Heart right ventricle (tissue), 16 donors: ENCODE measurements at regions of chr5 and their contacts with region 1.

Region 1: DNA sequence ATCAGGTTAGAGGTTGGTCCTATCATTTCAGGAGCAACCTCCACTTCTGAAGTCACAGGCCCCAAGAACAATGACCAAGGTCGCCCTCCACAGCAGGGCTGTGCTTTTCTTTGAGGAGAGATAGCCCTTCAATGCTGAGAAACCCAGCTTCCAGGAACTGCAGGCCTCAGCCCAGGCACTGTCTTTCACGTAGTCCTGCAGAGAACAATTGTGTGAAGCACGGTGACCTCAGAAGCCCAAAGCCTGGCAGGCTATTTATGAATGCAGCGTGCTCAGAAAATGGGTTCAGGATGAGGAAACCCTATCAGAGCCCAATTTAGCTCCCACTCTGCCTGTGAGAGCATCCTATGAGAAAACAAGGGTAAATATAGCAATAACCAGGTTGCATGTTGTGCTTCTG is 388.3 kb downstream of the PLK2 start:
- DNase-seq: peak; percentile 33 to 87
- ATAC-seq: peak; percentile 93 to 98 (median 98)
- H3K4me3 ChIP-seq: no peak overlapping the region
- H3K27ac ChIP-seq: peak overlapping the region; percentile 5 to 92 (median 77)
- H3K4me1 ChIP-seq: peaks cover 2 to 66% (median 52%) of the 10 kb centered on the region in 9 donors
- H3K27me3 ChIP-seq: no peaks in the 10 kb centered on the region
- CTCF ChIP-seq: peak in 1 of 9 donors; percentile 9

Region 2: DNA sequence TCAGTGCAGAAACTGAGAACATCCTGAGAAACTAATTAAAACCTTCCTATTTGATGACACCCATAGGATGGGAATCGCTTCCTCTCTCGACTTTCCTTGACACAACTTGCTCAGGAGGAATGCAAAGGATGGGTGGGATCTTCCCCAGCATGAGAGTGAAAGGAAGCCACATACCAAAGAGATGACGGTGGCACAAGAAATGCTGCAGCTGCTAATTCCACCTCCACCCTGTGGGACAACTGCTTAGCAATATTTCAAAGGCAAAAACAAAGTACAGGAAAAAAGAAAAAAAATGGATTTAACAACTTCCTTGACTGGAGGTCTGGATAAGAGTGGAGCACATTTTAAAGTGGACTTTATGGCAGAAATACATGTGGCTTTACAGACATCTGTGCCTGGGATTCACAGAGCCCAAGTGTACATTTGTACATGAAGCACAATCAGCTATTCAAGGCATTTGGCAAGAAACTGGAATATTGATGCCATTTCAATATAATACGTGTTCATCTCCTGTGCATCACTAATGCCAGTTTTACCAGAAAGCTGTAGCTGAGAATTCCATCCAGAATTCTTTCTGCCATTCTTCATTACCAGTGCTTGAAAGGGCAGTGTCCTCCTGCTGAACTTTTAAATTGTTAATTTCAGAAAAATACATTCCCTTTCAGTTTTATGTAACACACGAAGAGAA is 229.7 kb before region 1 on chr5:
- intact Hi-C with region 1: loop called in 1 of 10 experiments (anchors 5 kb)
- DNase-seq: no peak
- ATAC-seq: peak in 7 of 8 donors; percentile 66 to 87 (median 73)
- H3K4me3 ChIP-seq: no peak overlapping the region
- H3K27ac ChIP-seq: peak overlapping the region in 4 of 10 donors; percentile 29 to 67 (median 42)
- H3K4me1 ChIP-seq: peaks cover 0 to 47% (median 20%) of the 10 kb centered on the region in 9 donors
- H3K27me3 ChIP-seq: no peaks in the 10 kb centered on the region
- CTCF ChIP-seq: no peak

Region 3: DNA sequence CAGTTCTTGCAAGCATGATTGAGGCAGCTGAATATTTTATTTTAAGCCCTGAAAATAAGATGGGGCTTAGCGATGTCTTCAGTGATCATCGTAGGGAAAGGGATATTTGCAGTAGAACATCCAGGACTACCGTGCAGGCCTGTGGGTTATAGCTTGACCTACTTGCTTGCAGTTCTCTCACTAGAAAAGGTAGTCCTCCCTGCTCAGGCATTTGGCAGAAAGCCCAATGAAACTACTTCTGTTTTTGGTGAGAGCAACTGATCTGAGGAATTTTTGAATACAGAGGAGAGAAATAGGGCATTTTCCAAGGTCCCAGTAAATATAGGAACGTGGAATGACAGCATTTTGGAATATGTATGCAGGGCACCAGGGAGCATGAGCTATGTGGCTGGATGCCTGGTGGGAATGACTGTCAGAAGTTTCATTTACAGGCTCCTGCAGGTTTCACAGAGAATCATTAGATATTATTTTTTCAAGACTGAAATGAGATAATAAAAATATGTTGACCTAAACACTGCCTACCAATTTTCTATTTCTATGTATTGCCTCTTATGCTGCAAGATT is 171.1 kb before region 1 on chr5:
- intact Hi-C with region 1: loop called in 2 of 10 experiments (anchors 10 kb)
- DNase-seq: no peak
- ATAC-seq: no peak
- H3K4me3 ChIP-seq: no peak overlapping the region
- H3K27ac ChIP-seq: no peak overlapping the region
- H3K4me1 ChIP-seq: peaks cover 0 to 29% (median 5%) of the 10 kb centered on the region in 9 donors
- H3K27me3 ChIP-seq: no peaks in the 10 kb centered on the region
- CTCF ChIP-seq: no peak

Region 4: GRCh38 chr5:58240286-58240685 is 168.7 kb after region 1 on chr5:
- intact Hi-C with region 1: loop called in 4 of 10 experiments (anchors 5 to 10 kb)
- DNase-seq: no peak
- ATAC-seq: no peak
- H3K4me3 ChIP-seq: no peak overlapping the region
- H3K27ac ChIP-seq: peak overlapping the region in 8 of 10 donors; percentile 12 to 91 (median 68)
- H3K4me1 ChIP-seq: peaks cover 0 to 47% (median 9%) of the 10 kb centered on the region in 9 donors
- H3K27me3 ChIP-seq: no peaks in the 10 kb centered on the region
- CTCF ChIP-seq: no peak

Region 5: DNA sequence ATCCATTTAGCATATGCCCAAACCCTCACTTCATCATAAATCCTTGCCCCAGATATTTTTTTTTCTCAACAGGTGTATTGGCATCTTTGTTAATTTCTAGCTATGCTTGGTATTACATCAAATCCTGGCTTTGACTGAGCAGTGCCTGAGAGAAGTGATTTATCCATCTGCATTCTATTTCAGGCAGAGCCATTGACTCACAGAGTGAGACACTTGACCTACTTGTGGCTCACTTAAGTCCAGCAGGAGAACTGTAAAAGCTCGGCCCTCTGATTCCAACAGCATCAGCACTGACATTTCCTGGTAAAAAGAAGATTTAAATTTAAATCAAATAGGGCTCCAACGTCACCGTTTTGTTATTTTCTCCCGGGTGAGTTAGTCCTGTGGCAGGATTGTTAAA is 294.9 kb after region 1 on chr5:
- intact Hi-C with region 1: loop called in 1 of 10 experiments (anchors 10 kb)
- DNase-seq: peak in 1 of 2 donors; percentile 10
- ATAC-seq: peak; percentile 47 to 98 (median 87)
- H3K4me3 ChIP-seq: no peak overlapping the region
- H3K27ac ChIP-seq: peak overlapping the region in 7 of 10 donors; percentile 34 to 75 (median 53)
- H3K4me1 ChIP-seq: peaks cover 0 to 16% (median 0%) of the 10 kb centered on the region in 9 donors
- H3K27me3 ChIP-seq: no peaks in the 10 kb centered on the region
- CTCF ChIP-seq: no peak